HEK293 (cell line): ENCODE measurements at regions of chr19 and their contacts with region 1.

Region 1: DNA sequence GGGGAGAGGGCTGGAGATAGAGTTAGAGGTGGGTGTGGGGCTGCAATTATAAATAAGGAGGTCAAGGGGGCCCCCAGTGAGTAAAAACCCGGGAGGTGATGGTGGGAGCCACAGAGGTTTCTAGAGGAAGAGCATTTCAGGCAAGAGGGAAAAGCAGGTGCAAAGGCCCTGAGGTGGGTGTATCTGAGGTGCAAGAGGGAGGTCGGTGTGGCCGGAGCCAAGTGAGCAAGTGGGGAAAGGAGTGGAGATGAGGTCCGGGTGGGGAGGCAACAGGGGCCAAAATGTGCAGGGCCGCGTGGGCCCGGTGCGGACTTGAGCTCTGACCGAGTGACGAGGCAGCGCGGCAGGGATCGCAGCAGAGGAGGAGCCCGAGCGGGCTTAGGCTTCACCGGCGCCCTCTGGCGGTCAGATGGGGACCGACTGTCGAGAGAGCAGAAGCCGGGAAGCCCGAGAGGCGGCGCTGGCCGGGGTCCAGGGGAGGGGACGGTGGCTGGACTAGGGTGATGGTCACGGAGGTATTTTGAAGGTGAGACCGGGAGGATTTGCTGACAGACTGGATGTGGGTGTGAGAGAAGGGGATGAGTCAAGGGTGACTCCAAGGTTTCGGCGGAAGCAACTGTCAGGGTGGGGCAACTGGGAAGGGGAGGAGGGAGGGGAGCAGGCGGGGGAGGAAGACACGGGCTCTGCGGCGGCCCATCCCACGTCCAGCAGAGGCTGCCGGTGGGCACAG is 17.7 kb upstream of the SPACA4 start:
- H3K4me3 ChIP-seq: peak overlapping the region; percentile 47
- H3K27ac ChIP-seq: no peak overlapping the region
- H3K4me1 ChIP-seq: no peaks in the 10 kb centered on the region
- CTCF ChIP-seq: peak; percentile 100

Region 2: DNA sequence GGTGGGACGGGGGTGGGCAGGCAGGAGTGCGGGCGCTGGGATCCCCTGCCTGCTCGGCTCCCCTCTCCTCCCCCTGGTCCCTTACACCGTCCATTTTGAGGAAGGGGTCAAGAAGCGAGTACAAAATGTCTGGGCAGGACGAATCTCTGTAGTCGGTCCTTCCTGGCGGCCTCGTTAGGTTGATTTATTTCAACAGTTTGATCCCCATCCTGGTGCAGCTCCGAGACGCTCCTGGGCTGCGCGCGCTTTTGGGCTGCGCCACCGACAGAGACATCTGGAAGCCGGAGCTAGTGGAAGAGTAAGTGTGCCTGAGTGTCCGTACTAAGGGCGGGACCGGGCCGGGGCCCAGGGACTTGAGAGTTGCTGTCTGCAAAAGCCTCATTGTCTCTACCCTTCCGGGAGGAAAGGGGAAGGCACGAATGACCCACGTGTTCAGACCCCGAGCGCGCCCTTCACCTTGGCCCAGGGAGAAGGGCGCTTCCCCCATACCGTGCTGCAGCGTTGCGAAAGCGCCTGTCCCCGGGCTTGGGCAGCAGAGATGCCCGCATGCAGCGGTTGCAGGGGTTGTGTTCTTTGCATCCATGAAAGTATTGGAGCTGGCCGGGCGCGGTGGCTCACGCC is 317.2 kb before region 1 on chr19:
- CTCF ChIA-PET with region 1: interaction called, 16 read pairs
- POLR2A ChIA-PET with region 1: no interaction called
- H3K4me3 ChIP-seq: peak overlapping the region; percentile 41
- H3K27ac ChIP-seq: no peak overlapping the region
- H3K4me1 ChIP-seq: no peaks in the 10 kb centered on the region
- CTCF ChIP-seq: no peak

Region 3: DNA sequence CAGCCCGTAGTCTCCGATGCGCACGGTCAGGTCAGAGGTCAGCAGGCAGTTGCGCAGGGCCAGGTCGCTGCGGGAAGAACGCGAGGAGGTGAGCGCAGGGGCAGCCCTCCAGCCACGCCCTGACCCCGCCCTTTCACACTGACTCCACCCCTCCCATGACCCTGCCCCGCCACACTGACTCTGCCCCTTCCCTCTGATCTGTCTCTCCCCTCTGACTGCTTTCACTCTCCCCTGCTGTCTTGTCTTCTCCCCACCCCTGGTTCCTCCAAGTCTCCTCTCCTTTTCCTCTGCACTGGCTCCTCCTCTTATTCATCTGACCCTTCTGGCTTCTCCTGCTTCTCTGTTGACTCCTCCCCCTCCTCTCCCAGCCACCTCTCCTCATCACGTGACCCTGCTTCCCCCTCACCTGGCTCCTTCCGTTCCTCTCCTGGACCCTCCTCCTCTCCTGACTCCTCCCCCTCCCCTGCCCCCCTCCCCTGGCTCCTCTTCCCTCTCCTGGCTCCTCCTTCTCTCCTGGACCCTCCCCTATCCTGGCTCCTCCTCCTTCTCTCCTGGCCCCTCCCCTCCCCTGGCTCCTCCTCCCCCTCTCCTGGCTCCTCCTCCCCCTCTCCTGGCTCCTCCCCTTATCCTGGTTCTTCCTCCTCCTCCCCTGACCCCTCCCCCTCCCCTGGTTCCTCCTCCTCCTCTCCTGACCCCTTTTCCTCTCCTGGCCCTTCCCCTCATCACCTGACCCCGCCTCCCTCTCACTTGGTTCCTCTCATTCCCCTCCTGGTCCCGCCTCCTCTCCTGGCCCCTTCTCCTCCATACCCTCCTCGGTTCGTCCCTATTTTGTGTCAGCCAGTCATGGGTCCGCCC is 87.1 kb before region 1 on chr19:
- CTCF ChIA-PET with region 1: interaction called, 272 read pairs
- POLR2A ChIA-PET with region 1: interaction called, 23 read pairs
- H3K4me3 ChIP-seq: peak overlapping the region; percentile 21
- H3K27ac ChIP-seq: no peak overlapping the region; the same call in 1 of the 2 replicates
- H3K4me1 ChIP-seq: peaks cover 3% of the 10 kb centered on the region; the same call in 1 of the 2 replicates
- CTCF ChIP-seq: no peak

Region 4: DNA sequence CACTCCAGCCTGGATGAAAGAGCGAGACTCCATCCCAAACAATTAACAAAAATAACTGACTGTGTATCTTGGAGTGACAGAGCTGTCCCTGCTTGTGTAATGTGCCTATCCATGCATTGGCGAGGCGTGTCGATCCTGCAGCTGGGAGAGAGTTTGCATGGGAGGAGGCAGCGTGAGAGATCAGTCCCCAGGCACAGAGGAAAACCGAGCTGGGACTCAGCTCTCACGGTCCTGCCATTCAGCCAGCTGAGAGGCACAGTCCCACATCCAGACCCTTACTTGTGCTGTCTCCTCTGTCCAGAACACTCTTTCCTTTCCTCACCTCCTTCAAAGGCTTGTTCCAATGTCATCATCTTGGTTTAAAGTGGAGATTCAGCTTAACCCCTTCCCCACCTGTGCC is 48.7 kb before region 1 on chr19:
- CTCF ChIA-PET with region 1: interaction called, 17 read pairs
- POLR2A ChIA-PET with region 1: no interaction called
- H3K4me3 ChIP-seq: no peak overlapping the region
- H3K27ac ChIP-seq: no peak overlapping the region
- H3K4me1 ChIP-seq: no peaks in the 10 kb centered on the region; the same call in 1 of the 2 replicates
- CTCF ChIP-seq: no peak

Region 5: GRCh38 chr19:48608798-48609263 is 20.0 kb after region 1 on chr19:
- CTCF ChIA-PET with region 1: interaction called, 51 read pairs
- POLR2A ChIA-PET with region 1: interaction called, 6 read pairs
- H3K4me3 ChIP-seq: no peak overlapping the region
- H3K27ac ChIP-seq: no peak overlapping the region
- H3K4me1 ChIP-seq: no peaks in the 10 kb centered on the region; the same call in 1 of the 2 replicates
- CTCF ChIP-seq: peak; percentile 86

Region 6: DNA sequence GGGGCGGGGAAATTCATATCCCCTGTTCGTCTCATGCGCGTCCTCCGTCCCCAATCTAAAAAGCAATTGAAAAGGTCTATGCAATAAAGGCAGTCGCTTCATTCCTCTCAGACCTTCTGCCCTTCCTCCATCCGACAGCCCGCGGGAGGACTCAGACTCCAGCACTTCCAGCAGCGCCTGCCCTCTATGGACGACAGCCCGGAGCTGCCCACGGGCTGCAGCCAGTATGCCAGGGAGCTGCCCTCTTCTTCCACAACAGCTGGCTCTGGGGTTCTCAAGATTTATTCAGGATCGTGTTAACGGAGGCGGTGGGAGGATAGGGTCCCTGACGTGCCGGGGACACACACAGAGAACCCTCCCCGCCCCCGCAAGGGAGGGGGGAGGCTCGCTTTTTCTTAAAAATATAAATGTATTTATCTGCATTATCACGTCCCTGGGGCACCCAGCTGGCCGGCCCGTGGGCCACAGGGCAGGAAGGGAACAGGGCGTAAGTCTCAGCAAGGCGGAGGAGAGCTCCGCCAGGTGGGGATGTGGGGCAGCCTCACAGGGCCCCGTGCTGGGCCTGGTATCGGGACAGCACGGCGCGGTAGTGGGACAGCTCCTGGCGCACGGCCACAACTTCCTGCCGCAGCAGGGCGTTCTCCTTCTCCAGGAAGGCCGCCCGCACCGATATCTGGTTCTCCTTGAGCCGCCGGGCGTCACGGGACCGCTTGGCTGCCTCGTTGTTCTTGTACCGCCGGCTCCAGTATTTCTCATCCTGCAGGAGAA is 41.6 kb after region 1 on chr19:
- CTCF ChIA-PET with region 1: no interaction called
- POLR2A ChIA-PET with region 1: no interaction called
- H3K4me3 ChIP-seq: no peak overlapping the region
- H3K27ac ChIP-seq: no peak overlapping the region
- H3K4me1 ChIP-seq: peaks cover 14% of the 10 kb centered on the region
- CTCF ChIP-seq: no peak